CD4-positive, alpha-beta T cell (primary cell): ENCODE measurements at regions of chr2 and their contacts with region 1.

Region 1: GRCh38 chr2:113291191-113291590 is 12.5 kb upstream of the PAX8 start:
- DNase-seq: no peak
- ATAC-seq: no peak
- H3K4me3 ChIP-seq: no peak overlapping the region
- H3K4me3 Mint-ChIP-seq: no peak overlapping the region
- H3K27ac ChIP-seq: no peak overlapping the region
- H3K27ac Mint-ChIP-seq: no peak overlapping the region
- H3K4me1 ChIP-seq: no peaks in the 10 kb centered on the region
- H3K4me1 Mint-ChIP-seq: no peaks in the 10 kb centered on the region
- H3K27me3 ChIP-seq: no peaks in the 10 kb centered on the region
- H3K27me3 Mint-ChIP-seq: peaks cover 9% of the 10 kb centered on the region
- CTCF ChIP-seq: no peak

Region 2: GRCh38 chr2:113324684-113325160 is 33.5 kb after region 1 on chr2:
- CTCF ChIA-PET with region 1: no interaction called
- POLR2A ChIA-PET with region 1: no interaction called
- intact Hi-C with region 1: no loop called
- DNase-seq: peak in 13 of 14 experiments; percentile 13 to 70 (median 39)
- ATAC-seq: peak; percentile 90
- H3K4me3 ChIP-seq: peak overlapping the region; percentile 38
- H3K4me3 Mint-ChIP-seq: peak overlapping the region; percentile 70
- H3K27ac ChIP-seq: no peak overlapping the region
- H3K27ac Mint-ChIP-seq: no peak overlapping the region
- H3K4me1 ChIP-seq: peaks cover 7% of the 10 kb centered on the region
- H3K4me1 Mint-ChIP-seq: peaks cover 9% of the 10 kb centered on the region
- H3K27me3 ChIP-seq: peaks cover 0 to 2% of the 10 kb centered on the region in 2 experiments
- H3K27me3 Mint-ChIP-seq: no peaks in the 10 kb centered on the region
- CTCF ChIP-seq: no peak

Region 3: GRCh38 chr2:113342650-113343049 is 51.5 kb after region 1 on chr2:
- CTCF ChIA-PET with region 1: no interaction called
- POLR2A ChIA-PET with region 1: no interaction called
- intact Hi-C with region 1: loop called in 1 of 2 experiments (anchors 2 kb)
- DNase-seq: peak in 4 of 14 experiments; percentile 9 to 55 (median 38)
- ATAC-seq: peak; percentile 68
- H3K4me3 ChIP-seq: no peak overlapping the region
- H3K4me3 Mint-ChIP-seq: no peak overlapping the region
- H3K27ac ChIP-seq: no peak overlapping the region
- H3K27ac Mint-ChIP-seq: no peak overlapping the region
- H3K4me1 ChIP-seq: peaks cover 2% of the 10 kb centered on the region
- H3K4me1 Mint-ChIP-seq: peaks cover 7% of the 10 kb centered on the region
- H3K27me3 ChIP-seq: peaks cover 2 to 4% of the 10 kb centered on the region in 2 experiments
- H3K27me3 Mint-ChIP-seq: peaks cover 17% of the 10 kb centered on the region
- CTCF ChIP-seq: no peak